Aorta (tissue), 5 donors: ENCODE measurements at regions of chr9 and their contacts with region 1.

Region 1: DNA sequence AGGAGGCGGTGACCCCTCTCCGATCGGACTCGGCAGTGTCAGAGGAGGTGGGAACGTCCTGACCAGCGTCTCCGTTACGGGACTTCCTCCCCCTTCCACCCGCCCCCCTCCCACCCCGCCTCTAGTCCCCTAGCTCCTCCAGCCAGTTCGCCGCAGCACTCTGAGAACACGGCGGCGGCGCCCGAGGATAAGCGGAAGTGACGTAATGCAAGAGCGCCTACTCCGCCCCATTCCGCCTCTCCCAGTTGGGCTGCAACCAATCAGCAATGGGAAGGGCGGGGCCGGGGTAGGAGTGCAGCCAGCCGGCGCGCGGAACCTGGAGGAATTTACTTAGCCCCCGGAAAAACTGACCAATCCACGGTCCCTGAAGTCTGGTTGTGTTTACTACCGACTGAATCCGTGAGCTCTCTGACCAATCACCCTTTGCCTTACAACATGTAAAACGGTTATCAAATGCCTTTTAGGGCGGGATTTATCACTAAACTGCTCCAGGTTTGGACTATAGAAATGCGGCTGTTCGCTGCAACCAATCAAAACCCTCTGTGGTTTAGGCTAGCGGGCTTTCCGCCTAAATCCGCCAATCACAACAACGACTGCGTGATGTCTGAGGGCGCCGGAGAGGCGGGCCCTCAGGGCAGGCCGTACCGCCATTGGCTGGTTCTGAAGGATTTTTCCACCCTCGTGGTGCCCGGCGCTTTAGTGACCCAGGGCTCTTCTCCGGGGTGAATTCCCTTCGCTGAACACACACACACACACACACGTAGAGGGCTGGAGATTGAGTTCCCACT is at the start of gene ZBTB5:
- DNase-seq: peak; percentile 99
- ATAC-seq: peak; percentile 96
- H3K4me3 ChIP-seq: peak within 1 kb of the TSS; percentile 55 to 69
- H3K27ac ChIP-seq: peak within 1 kb of the TSS; percentile 39 to 96
- H3K4me1 ChIP-seq: peaks cover 0 to 11% of the 10 kb centered on the region in 2 donors
- H3K27me3 ChIP-seq: no peaks in the 10 kb centered on the region
- total RNA-seq, gene ZBTB5: 10.7 to 11.4 TPM

Region 2: GRCh38 chr9:37271679-37272078 is 193.8 kb before region 1 on chr9:
- intact Hi-C with region 1: no loop called
- DNase-seq: no peak
- ATAC-seq: no peak
- H3K4me3 ChIP-seq: no peak overlapping the region
- H3K27ac ChIP-seq: no peak overlapping the region
- H3K4me1 ChIP-seq: no peaks in the 10 kb centered on the region
- H3K27me3 ChIP-seq: no peaks in the 10 kb centered on the region

Region 3: DNA sequence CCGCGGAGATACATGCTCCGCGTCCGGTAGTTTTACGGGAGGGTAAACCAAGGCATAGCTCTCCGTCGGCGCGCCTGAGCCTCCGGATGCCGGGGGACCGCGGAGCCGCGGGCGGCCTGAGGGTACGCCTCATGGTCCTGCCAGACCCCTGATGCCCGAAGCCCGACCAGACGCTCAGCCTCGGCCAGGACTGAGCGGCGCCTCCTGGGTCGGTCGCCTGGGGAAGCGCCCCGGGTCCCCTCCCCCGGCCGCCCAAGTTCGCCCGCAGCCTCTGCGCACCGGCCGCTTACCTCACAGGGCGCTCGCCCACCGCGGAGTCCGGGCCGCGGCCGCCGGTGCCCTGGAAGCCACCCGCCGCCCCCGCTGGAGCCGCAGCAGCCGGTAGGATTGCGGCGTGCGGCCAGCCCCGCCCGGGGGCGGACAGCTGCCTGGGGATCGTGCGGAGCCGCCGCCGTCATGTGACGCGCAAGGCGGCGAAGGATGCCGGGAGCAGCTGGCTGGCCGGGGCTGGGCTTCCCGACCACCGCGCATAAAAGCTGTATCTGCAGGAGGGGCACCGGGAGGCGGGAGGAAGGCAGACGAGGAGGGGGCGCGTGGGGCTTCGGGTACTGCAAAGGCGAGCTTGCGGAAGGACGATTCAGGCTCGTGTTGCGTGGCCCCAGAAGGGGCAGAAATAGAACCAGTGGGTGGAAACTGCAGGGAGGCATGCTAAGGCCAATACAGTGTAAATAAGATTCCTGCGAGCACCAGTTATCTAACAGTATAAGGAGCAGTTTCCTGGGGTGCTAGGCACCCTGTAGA is 110.7 kb after region 1 on chr9 and contains the start of gene FBXO10:
- intact Hi-C with region 1: loop called in 1 of 2 experiments (anchors 5 kb)
- DNase-seq: peak; percentile 80 to 90
- ATAC-seq: peak; percentile 91
- H3K4me3 ChIP-seq: peak within 1 kb of the TSS; percentile 39 to 78
- H3K27ac ChIP-seq: peak within 1 kb of the TSS in 1 of 2 donors; percentile 53
- H3K4me1 ChIP-seq: no peaks in the 10 kb centered on the region
- H3K27me3 ChIP-seq: no peaks in the 10 kb centered on the region
- total RNA-seq, gene FBXO10: 6.2 to 7.8 TPM